ENCODE measurements at regions of chr9 and their contacts with region 1.

Region 1: GRCh38 chr9:24090566-24090965 is 264.5 kb upstream of the ELAVL2 start:
- DNase-seq: no peak
- ATAC-seq: no peak
- H3K4me3 Mint-ChIP-seq: no peak overlapping the region
- H3K27ac Mint-ChIP-seq: no peak overlapping the region
- H3K4me1 Mint-ChIP-seq: no peaks in the 10 kb centered on the region
- H3K27me3 Mint-ChIP-seq: no peaks in the 10 kb centered on the region
- CTCF ChIP-seq: no peak

Region 2: GRCh38 chr9:24846248-24846912 is 755.8 kb after region 1 on chr9:
- CTCF ChIA-PET with region 1: no interaction called
- POLR2A ChIA-PET with region 1: no interaction called
- intact Hi-C with region 1: loop called (anchors 10 kb)
- DNase-seq: no peak
- ATAC-seq: no peak
- H3K4me3 Mint-ChIP-seq: no peak overlapping the region
- H3K27ac Mint-ChIP-seq: no peak overlapping the region
- H3K4me1 Mint-ChIP-seq: no peaks in the 10 kb centered on the region
- H3K27me3 Mint-ChIP-seq: no peaks in the 10 kb centered on the region
- CTCF ChIP-seq: no peak

Measured in activated CD8-positive, alpha-beta T cell treated with anti-CD3 and anti-CD28 coated beads for 36 hours (primary cell).